ENCODE measurements at regions of chr19 and their contacts with region 1.

Region 1: GRCh38 chr19:55385740-55386529 is at the start of gene RPL28:
- DNase-seq: peak; percentile 92 to 99
- ATAC-seq: peak; percentile 54 to 77
- H3K4me3 ChIP-seq: peak within 1 kb of the TSS; percentile 89
- H3K27ac ChIP-seq: peak within 1 kb of the TSS; percentile 91 to 99
- H3K4me1 ChIP-seq: peaks cover 50% of the 10 kb centered on the region
- CTCF ChIP-seq: no peak
- EP300 ChIP-seq: no peak
- POLR2A ChIP-seq: peak; percentile 100
- RAD21 ChIP-seq: no peak
- polyA plus RNA-seq, gene RPL28: 329 and 351 TPM in 2 replicates

Region 2: GRCh38 chr19:54916822-54917221 is 469.1 kb before region 1 on chr19:
- CTCF ChIA-PET with region 1: no interaction called
- POLR2A ChIA-PET with region 1: no interaction called
- DNase-seq: no peak
- ATAC-seq: no peak
- H3K4me3 ChIP-seq: no peak overlapping the region
- H3K27ac ChIP-seq: no peak overlapping the region
- H3K4me1 ChIP-seq: no peaks in the 10 kb centered on the region
- CTCF ChIP-seq: no peak
- EP300 ChIP-seq: no peak
- POLR2A ChIP-seq: no peak
- RAD21 ChIP-seq: no peak

Region 3: GRCh38 chr19:55041617-55042349 is 344.2 kb before region 1 on chr19:
- CTCF ChIA-PET with region 1: no interaction called
- POLR2A ChIA-PET with region 1: no interaction called
- DNase-seq: no peak
- ATAC-seq: no peak
- H3K4me3 ChIP-seq: no peak overlapping the region
- H3K27ac ChIP-seq: no peak overlapping the region
- H3K4me1 ChIP-seq: no peaks in the 10 kb centered on the region
- CTCF ChIP-seq: no peak
- EP300 ChIP-seq: no peak
- POLR2A ChIP-seq: no peak
- RAD21 ChIP-seq: no peak

Region 4: DNA sequence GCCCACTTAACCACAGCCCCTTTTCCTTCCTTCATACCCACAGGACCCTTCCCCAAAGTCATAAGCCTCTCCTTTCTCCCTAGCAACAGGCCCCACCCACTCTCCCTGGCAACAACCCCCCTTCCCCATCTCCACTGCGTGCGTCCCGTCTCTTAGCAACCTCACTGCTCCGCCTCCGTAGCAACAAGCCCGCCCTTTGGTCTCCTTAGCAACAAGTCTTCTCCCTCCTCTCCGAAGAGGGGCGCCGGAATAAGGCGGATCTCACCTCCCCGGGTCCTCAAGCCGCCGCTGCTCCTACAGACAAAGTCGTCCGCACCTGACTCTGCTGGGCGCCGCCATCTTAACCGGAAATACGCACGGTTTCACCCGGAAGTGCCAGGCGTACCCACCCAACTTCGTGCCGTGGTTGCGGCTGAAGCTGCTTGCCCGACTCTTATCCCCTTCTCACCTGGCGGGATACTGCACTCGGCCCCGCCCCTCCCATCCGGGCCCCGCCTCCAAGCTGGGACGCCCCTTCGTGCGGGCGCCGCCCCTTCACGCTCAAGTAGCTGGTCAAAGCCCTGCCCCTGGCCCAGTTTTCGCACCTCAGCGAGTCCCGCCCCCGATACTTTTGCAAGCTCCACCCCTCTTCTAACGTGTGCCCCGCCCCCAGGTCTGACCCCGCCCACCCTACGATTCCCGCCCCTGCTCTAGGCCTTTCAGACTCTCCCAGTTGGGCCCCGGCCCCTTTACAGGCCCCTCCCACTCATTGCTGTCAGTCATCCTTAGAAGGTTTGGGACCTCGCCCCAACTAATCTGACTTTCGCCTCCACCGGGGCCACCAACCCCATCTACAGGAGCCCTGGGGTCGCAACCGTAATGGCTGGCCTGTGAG is 105.9 kb before region 1 on chr19 and contains the start of gene HSPBP1:
- CTCF ChIA-PET with region 1: interaction called, 16 read pairs
- POLR2A ChIA-PET with region 1: interaction called, 13 read pairs
- DNase-seq: peak; percentile 85 to 100
- ATAC-seq: peak; percentile 92 to 95
- H3K4me3 ChIP-seq: peak within 1 kb of the TSS; percentile 75
- H3K27ac ChIP-seq: peak within 1 kb of the TSS; percentile 80 to 92
- H3K4me1 ChIP-seq: peaks cover 33% of the 10 kb centered on the region
- CTCF ChIP-seq: no peak
- EP300 ChIP-seq: no peak
- POLR2A ChIP-seq: peak; percentile 67
- RAD21 ChIP-seq: no peak
- polyA plus RNA-seq, gene HSPBP1: 52.1 and 55.3 TPM in 2 replicates

Region 5: DNA sequence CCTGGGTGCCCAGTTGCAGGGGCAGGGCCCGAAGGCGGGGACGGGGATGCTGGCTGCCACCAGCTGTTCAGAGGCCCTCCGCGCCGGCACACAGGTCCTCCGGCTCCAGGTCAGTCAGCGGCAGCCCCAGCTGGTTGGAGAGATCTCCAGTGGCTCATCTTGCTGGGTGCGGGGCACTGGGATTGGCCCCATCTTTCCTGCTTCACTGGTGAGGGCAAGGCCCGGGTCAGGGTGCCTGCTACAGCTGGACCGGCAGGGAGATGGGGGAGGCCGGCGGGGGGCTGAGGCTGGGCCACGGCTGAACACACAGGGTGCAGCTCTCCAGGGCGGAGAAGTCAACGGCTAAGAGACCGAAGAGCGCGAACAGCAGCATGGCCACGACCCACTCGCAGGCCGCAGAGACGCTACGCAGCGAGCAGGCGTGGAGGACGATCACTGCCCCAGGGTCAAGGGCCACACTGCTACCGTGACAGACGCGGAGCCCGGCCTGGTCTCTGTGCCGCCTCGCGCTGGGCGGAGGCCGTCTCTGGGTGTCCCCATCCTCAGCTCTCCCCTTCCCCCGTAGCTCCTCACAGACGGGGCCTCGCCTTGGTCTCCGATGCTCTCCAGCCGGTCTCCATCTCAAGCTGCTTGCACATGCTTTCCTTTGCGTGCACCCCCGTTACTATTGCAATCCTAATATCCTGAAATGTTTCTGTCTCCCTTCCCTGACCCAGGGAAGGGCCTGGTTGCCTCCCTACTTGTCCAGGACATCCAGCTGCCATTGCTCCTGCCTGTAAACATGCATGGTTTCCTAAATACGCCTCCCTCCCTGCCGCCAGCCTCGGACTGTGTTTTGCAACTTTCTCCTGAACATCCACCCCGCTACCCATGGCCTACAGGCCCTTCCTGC is 73.1 kb before region 1 on chr19:
- CTCF ChIA-PET with region 1: interaction called, 11 read pairs
- POLR2A ChIA-PET with region 1: no interaction called
- DNase-seq: no peak
- ATAC-seq: peak; percentile 10 to 16; a peak in 3 of 6 replicates
- H3K4me3 ChIP-seq: no peak overlapping the region
- H3K27ac ChIP-seq: no peak overlapping the region
- H3K4me1 ChIP-seq: no peaks in the 10 kb centered on the region
- CTCF ChIP-seq: no peak
- EP300 ChIP-seq: no peak
- POLR2A ChIP-seq: no peak
- RAD21 ChIP-seq: no peak

Region 6: GRCh38 chr19:55369671-55370304 is 16.1 kb before region 1 on chr19:
- CTCF ChIA-PET with region 1: interaction called, 17 read pairs
- POLR2A ChIA-PET with region 1: interaction called, 13 read pairs
- DNase-seq: peak; percentile 86 to 98
- ATAC-seq: peak; percentile 45 to 71
- H3K4me3 ChIP-seq: peak overlapping the region; percentile 85
- H3K27ac ChIP-seq: peak overlapping the region; percentile 91 to 96
- H3K4me1 ChIP-seq: peaks cover 61% of the 10 kb centered on the region
- CTCF ChIP-seq: no peak
- EP300 ChIP-seq: no peak
- POLR2A ChIP-seq: no peak
- RAD21 ChIP-seq: no peak